ENCODE measurements at regions of chr1 and their contacts with region 1.

Region 1: GRCh38 chr1:79587229-79587628 is 580.7 kb upstream of the ADGRL4 start:
- DNase-seq: no peak
- ATAC-seq: 0 out of 2 replicates have a peak, but pooled peaks have one; percentile 24
- H3K4me3 ChIP-seq: no peak overlapping the region
- H3K27ac ChIP-seq: no peak overlapping the region
- H3K4me1 ChIP-seq: no peaks in the 10 kb centered on the region
- H3K27me3 ChIP-seq: no peaks in the 10 kb centered on the region
- CTCF ChIP-seq: no peak

Region 2: DNA sequence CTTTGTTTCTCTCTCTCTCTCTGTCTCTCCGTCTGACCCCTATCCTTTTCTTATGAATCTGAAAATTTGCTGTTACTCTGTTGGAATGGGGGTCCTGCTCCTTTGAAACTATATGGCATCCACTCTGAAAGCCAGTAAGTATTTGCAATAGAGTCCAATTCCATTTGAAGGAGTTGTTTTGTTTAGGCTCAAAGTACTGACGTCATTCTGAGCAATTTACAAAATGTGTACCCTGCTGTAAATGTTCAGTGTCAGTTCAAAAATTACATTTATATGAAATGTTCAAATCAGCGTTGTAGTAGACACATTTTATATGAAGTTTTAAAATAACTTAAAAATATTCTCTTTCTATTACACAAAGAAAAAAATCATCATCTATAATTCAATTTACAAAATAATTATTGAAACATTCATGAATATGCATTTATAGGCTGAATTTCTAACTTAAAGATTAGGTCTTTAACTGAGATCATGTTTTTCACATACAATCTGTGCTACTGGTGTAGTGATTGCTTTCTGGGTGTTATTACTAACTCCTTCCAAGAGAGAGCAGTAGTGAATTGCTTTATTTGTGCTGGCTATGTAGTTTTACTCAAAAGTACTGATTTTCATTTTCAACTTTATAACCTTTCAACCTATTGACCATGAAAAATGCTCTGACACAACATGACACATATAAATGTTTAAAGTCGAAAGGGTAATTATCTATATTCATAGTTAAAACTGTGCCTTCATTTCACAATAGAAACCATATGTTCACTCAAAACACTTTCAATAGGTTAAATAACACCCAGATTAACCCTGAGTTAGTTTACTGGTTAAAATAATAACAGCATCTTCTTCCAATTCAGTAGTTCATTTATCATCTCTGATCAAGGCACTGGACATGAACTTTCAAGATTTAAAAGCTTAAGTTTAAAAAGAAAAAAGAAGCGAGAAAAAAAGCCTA is 327.6 kb before region 1 on chr1:
- CTCF ChIA-PET with region 1: no interaction called
- POLR2A ChIA-PET with region 1: no interaction called
- intact Hi-C with region 1: loop called (anchors 10 kb)
- DNase-seq: peak; percentile 56
- ATAC-seq: peak; percentile 51; the same call in 1 of the 2 replicates
- H3K4me3 ChIP-seq: no peak overlapping the region
- H3K27ac ChIP-seq: no peak overlapping the region
- H3K4me1 ChIP-seq: peaks cover 15% of the 10 kb centered on the region
- H3K27me3 ChIP-seq: no peaks in the 10 kb centered on the region
- CTCF ChIP-seq: peak; percentile 82

Region 3: GRCh38 chr1:79497193-79497773 is 89.9 kb before region 1 on chr1:
- CTCF ChIA-PET with region 1: no interaction called
- POLR2A ChIA-PET with region 1: no interaction called
- intact Hi-C with region 1: loop called (anchors 5 kb)
- DNase-seq: peak; percentile 66
- ATAC-seq: peak; percentile 57
- H3K4me3 ChIP-seq: no peak overlapping the region
- H3K27ac ChIP-seq: no peak overlapping the region
- H3K4me1 ChIP-seq: no peaks in the 10 kb centered on the region
- H3K27me3 ChIP-seq: no peaks in the 10 kb centered on the region
- CTCF ChIP-seq: peak; percentile 96

Region 4: DNA sequence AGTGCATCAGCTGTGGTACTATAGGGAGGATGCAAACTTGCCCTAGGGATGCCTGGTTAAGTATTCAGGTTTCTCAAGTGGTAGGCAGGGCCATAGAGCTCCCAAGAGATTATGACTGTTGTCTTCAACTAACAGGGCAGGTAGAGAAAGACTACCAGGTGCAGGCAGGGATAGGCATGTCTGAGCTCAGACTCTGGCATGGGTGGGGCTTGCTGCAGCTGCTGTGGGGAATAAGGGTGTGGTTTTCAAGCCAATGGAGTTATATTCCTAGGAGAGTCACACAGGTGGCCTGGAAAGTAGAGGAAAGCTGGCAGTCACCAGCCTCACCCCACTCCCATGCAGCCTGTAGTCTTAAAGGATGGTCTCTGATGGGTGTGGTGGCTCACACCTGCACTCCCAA is 92.7 kb after region 1 on chr1:
- CTCF ChIA-PET with region 1: no interaction called
- POLR2A ChIA-PET with region 1: no interaction called
- intact Hi-C with region 1: loop called (anchors 2 kb)
- DNase-seq: no peak
- ATAC-seq: no peak
- H3K4me3 ChIP-seq: no peak overlapping the region
- H3K27ac ChIP-seq: no peak overlapping the region
- H3K4me1 ChIP-seq: no peaks in the 10 kb centered on the region
- H3K27me3 ChIP-seq: no peaks in the 10 kb centered on the region
- CTCF ChIP-seq: no peak

Region 5: GRCh38 chr1:79811173-79811572 is 223.9 kb after region 1 on chr1:
- CTCF ChIA-PET with region 1: no interaction called
- POLR2A ChIA-PET with region 1: no interaction called
- intact Hi-C with region 1: loop called (anchors 10 kb)
- DNase-seq: peak; percentile 68
- ATAC-seq: peak; percentile 89
- H3K4me3 ChIP-seq: no peak overlapping the region
- H3K27ac ChIP-seq: peak overlapping the region; percentile 58
- H3K4me1 ChIP-seq: peaks cover 11% of the 10 kb centered on the region
- H3K27me3 ChIP-seq: no peaks in the 10 kb centered on the region
- CTCF ChIP-seq: no peak

Region 6: DNA sequence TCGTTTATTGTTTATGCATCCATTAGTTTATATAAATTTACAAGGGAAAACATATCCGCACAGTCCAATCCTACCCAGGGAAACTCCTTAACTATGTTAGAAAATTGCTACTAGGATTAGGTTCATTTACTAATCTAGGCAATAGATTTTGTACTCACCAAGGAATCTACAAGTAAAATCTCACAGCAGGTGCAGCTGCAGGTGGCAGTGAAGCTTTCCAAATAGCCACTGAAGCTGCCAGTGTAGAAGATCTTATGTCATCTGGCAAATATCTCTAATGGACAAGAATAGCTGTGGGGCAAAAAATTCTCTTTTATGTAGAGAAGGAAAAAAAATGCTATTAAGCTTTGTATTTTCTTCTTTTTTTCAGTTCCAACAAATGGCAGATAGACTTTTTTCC is 382.7 kb after region 1 on chr1:
- CTCF ChIA-PET with region 1: no interaction called
- POLR2A ChIA-PET with region 1: no interaction called
- intact Hi-C with region 1: loop called (anchors 10 kb)
- DNase-seq: no peak
- ATAC-seq: no peak
- H3K4me3 ChIP-seq: no peak overlapping the region
- H3K27ac ChIP-seq: no peak overlapping the region
- H3K4me1 ChIP-seq: peaks cover 11% of the 10 kb centered on the region
- H3K27me3 ChIP-seq: no peaks in the 10 kb centered on the region
- CTCF ChIP-seq: no peak